ENCODE measurements at regions of chr5 and their contacts with region 1.

Region 1: GRCh38 chr5:157994906-157995519 is 136.1 kb upstream of the CLINT1 start:
- DNase-seq: peak; percentile 86
- H3K4me3 Mint-ChIP-seq: peak overlapping the region; percentile 47
- H3K27ac Mint-ChIP-seq: peak overlapping the region; percentile 7
- H3K4me1 Mint-ChIP-seq: peaks cover 21% of the 10 kb centered on the region
- H3K27me3 Mint-ChIP-seq: no peaks in the 10 kb centered on the region
- CTCF ChIP-seq: peak; percentile 70

Region 2: DNA sequence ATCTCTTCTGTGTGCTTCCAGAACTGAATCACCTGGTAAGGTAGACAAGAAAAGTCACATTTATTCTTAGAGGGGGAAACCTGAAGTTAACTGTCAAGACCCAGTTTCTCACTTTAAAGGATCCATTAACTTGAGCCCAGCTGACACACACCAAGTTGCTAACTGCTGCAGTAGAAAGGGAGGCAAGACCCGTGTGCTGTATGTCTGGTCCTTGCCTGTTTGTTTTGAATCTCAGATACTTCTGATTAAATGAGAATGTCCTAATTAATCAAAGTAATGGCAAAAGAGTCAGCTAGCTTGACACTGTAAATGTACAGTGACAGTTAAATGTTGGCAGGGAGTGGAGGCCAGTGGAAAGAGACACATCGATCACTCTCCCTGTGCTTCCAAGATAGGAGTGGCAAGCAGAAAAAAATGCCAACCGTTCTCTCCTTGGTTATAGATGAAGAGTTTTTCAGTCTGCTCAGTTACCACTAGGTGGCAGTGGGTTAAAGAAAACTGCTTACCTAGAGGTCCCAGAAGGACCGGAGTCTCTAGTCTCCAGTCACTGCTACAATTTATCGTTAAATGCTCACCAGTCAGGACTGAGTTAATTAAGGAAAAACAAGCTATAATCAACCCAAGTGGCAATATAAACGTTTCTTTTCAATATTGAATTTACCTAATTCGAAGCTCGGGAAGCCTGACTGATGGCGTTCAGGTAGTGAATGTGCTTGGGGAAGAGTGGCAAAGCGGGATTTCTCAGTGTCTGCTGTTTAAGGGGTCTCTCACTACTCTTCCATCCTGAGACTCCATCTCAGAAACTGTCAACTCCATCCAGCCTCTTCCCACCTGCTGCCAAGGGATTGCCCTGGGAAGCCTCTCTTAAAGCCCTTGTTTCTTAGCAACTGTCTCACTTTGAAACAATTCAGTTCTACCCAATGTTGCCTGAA is 233.1 kb before region 1 on chr5:
- CTCF ChIA-PET with region 1: no interaction called
- intact Hi-C with region 1: loop called (anchors 1 kb)
- DNase-seq: peak; percentile 62
- H3K4me3 Mint-ChIP-seq: no peak overlapping the region
- H3K27ac Mint-ChIP-seq: no peak overlapping the region
- H3K4me1 Mint-ChIP-seq: no peaks in the 10 kb centered on the region
- H3K27me3 Mint-ChIP-seq: no peaks in the 10 kb centered on the region
- CTCF ChIP-seq: peak; percentile 58

Region 3: GRCh38 chr5:157917899-157918809 is 76.9 kb before region 1 on chr5:
- CTCF ChIA-PET with region 1: interaction called, 13 read pairs
- intact Hi-C with region 1: loop called (anchors 1 kb)
- DNase-seq: peak; percentile 86
- H3K4me3 Mint-ChIP-seq: peak overlapping the region; percentile 60
- H3K27ac Mint-ChIP-seq: peak overlapping the region; percentile 92
- H3K4me1 Mint-ChIP-seq: peaks cover 70% of the 10 kb centered on the region
- H3K27me3 Mint-ChIP-seq: no peaks in the 10 kb centered on the region
- CTCF ChIP-seq: peak; percentile 61